Activated B cell treated with CpG ODN at 0.5 μM for 24 hours (primary cell): ENCODE measurements at regions of chr18 and their contacts with region 1.

Region 1: GRCh38 chr18:12531749-12532148 is 124.0 kb downstream of the PRELID3A start:
- DNase-seq: no peak
- ATAC-seq: no peak
- H3K4me3 Mint-ChIP-seq: no peak overlapping the region
- H3K27ac Mint-ChIP-seq: no peak overlapping the region
- H3K4me1 Mint-ChIP-seq: no peaks in the 10 kb centered on the region
- H3K27me3 Mint-ChIP-seq: no peaks in the 10 kb centered on the region
- CTCF ChIP-seq: no peak

Region 2: GRCh38 chr18:12391618-12392165 is 140.1 kb before region 1 on chr18:
- CTCF ChIA-PET with region 1: no interaction called
- POLR2A ChIA-PET with region 1: no interaction called
- intact Hi-C with region 1: loop called (anchors 5 kb)
- DNase-seq: no peak
- ATAC-seq: peak; percentile 98
- H3K4me3 Mint-ChIP-seq: no peak overlapping the region
- H3K27ac Mint-ChIP-seq: no peak overlapping the region
- H3K4me1 Mint-ChIP-seq: no peaks in the 10 kb centered on the region
- H3K27me3 Mint-ChIP-seq: peaks cover 13% of the 10 kb centered on the region
- CTCF ChIP-seq: no peak

Region 3: DNA sequence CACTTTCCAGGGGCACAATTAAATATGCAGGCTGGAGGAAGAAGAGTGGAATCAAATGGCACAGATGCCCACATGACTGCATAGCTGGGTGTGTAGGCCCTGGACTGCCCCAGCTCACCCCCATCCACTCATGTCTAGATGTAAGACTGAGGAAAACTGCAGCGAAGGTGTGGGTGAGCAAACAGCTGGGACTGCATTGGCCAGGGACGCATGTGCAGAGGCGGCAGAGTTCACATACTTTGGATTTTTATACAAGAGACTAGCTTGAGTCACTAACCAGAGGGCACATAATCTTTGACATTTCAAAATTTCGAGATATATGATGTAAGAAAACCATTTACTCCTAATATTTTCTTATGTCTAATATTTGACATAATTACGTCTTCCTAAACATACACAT is 66.0 kb after region 1 on chr18:
- CTCF ChIA-PET with region 1: no interaction called
- POLR2A ChIA-PET with region 1: no interaction called
- intact Hi-C with region 1: no loop called
- DNase-seq: no peak
- ATAC-seq: no peak
- H3K4me3 Mint-ChIP-seq: no peak overlapping the region
- H3K27ac Mint-ChIP-seq: no peak overlapping the region
- H3K4me1 Mint-ChIP-seq: peaks cover 2% of the 10 kb centered on the region
- H3K27me3 Mint-ChIP-seq: no peaks in the 10 kb centered on the region
- CTCF ChIP-seq: no peak